CD8-positive, alpha-beta memory T cell (primary cell): ENCODE measurements at regions of chr2 and their contacts with region 1.

Region 1: DNA sequence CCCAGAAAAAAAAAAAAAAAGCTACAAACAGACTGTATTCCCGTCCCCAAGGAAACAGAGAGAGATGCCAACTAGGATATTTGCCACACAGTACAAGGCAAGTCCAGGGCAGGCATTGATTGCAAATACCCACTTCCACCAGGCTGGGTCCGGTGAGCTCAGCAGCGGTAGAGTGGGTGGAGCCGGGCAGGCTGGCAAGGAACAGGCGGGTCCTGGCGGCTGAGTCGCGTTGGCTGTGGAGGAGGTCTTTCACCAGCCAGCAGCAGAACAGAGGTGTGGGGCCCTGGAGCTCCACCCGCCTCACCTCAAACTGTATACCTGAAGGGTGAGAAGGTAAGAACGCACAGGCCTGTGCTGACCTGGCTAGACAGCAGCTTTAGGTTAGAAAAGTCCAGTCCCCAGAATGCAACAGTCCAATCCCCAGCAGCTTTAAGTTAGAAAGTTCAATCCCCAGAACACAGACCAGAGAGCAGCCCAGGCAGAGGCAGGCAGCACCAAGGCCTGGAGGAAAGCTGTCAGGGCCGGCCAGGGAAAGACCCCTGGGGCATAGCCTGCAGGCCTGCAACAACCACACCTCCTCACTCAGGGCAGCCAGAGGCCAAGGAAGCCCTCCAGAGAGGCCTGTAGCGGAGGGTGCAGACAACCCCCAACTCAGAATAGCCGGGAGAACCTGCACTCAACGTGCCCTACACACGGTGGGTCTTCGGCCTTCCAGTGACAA is 21.9 kb upstream of the MTERF4 start:
- DNase-seq: peak in 1 of 5 donors; percentile 65
- H3K4me3 ChIP-seq: no peak overlapping the region
- H3K4me3 Mint-ChIP-seq: peak overlapping the region in 5 of 7 donors; percentile 9 to 61 (median 48)
- H3K27ac ChIP-seq: no peak overlapping the region
- H3K27ac Mint-ChIP-seq: peak overlapping the region in 6 of 8 donors; percentile 21 to 95 (median 69)
- H3K4me1 ChIP-seq: peaks cover 8% of the 10 kb centered on the region
- H3K4me1 Mint-ChIP-seq: peaks cover 20 to 46% (median 30%) of the 10 kb centered on the region in 3 donors
- H3K27me3 ChIP-seq: no peaks in the 10 kb centered on the region
- H3K27me3 Mint-ChIP-seq: no peaks in the 10 kb centered on the region

Region 2: GRCh38 chr2:241081643-241082340 is 42.2 kb before region 1 on chr2:
- CTCF ChIA-PET with region 1: interaction called, 10 read pairs
- POLR2A ChIA-PET with region 1: no interaction called
- DNase-seq: no peak
- H3K4me3 ChIP-seq: no peak overlapping the region
- H3K4me3 Mint-ChIP-seq: no peak overlapping the region
- H3K27ac ChIP-seq: no peak overlapping the region
- H3K27ac Mint-ChIP-seq: peak overlapping the region in 5 of 8 donors; percentile 12 to 95 (median 60)
- H3K4me1 ChIP-seq: peaks cover 3% of the 10 kb centered on the region
- H3K4me1 Mint-ChIP-seq: peaks cover 5 to 32% (median 17%) of the 10 kb centered on the region in 3 donors
- H3K27me3 ChIP-seq: no peaks in the 10 kb centered on the region
- H3K27me3 Mint-ChIP-seq: no peaks in the 10 kb centered on the region

Region 3: GRCh38 chr2:241157841-241158545 is 34.0 kb after region 1 on chr2:
- CTCF ChIA-PET with region 1: no interaction called
- POLR2A ChIA-PET with region 1: interaction called, 12 read pairs
- DNase-seq: no peak
- H3K4me3 ChIP-seq: no peak overlapping the region
- H3K4me3 Mint-ChIP-seq: no peak overlapping the region
- H3K27ac ChIP-seq: no peak overlapping the region
- H3K27ac Mint-ChIP-seq: peak overlapping the region in 1 of 8 donors; percentile 70
- H3K4me1 ChIP-seq: no peaks in the 10 kb centered on the region
- H3K4me1 Mint-ChIP-seq: peaks cover 6 to 22% (median 12%) of the 10 kb centered on the region in 3 donors
- H3K27me3 ChIP-seq: no peaks in the 10 kb centered on the region
- H3K27me3 Mint-ChIP-seq: no peaks in the 10 kb centered on the region